Activated CD8-positive, alpha-beta T cell treated with anti-CD3 and anti-CD28 coated beads, Interleukin-2, amount 10 ng/mL, durations not matched to agents 7 days and 5 days (primary cell): ENCODE measurements at regions of chr20 and their contacts with region 1.

Region 1: DNA sequence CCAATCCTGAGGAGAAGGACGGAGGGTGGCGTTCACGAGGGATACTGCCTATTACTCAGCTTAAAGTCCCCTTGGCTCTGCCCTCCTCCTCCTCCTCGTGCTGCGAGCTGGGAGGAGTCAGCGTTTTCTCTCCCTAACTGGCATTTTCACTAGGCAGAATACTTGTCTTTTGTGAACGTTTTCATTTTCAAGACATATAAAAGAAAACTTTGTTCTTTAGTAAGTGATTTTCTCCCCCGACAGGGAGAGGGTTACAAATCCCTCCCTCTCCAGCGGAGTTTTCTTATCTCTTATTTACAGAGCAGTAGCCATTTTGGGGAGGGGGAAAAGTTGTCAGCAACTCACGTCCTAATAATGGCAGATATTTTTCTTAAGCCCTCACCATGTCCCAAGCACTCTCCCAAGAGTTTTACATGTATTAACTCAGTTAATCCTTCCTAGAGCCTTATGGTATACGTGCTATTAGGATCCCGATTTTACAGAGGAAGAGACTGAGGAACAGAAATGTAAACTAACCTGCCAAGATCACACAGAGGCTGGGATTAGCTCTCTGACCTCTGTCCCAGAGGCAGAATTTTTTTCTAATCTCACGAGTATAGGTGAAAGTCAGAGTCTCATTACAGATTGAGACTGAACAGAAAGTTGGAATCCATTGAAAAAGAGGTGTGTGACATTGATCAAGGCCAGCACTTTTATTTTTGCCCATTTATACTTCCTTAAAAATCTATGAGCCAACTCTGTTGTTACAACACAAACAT is 30.0 kb upstream of the ZNF217 start:
- DNase-seq: peak; percentile 56
- ATAC-seq: peak; percentile 75
- H3K4me3 Mint-ChIP-seq: peak overlapping the region; percentile 72
- H3K27ac Mint-ChIP-seq: peak overlapping the region; percentile 97
- H3K4me1 Mint-ChIP-seq: peaks cover 56% of the 10 kb centered on the region
- H3K27me3 Mint-ChIP-seq: no peaks in the 10 kb centered on the region

Region 2: DNA sequence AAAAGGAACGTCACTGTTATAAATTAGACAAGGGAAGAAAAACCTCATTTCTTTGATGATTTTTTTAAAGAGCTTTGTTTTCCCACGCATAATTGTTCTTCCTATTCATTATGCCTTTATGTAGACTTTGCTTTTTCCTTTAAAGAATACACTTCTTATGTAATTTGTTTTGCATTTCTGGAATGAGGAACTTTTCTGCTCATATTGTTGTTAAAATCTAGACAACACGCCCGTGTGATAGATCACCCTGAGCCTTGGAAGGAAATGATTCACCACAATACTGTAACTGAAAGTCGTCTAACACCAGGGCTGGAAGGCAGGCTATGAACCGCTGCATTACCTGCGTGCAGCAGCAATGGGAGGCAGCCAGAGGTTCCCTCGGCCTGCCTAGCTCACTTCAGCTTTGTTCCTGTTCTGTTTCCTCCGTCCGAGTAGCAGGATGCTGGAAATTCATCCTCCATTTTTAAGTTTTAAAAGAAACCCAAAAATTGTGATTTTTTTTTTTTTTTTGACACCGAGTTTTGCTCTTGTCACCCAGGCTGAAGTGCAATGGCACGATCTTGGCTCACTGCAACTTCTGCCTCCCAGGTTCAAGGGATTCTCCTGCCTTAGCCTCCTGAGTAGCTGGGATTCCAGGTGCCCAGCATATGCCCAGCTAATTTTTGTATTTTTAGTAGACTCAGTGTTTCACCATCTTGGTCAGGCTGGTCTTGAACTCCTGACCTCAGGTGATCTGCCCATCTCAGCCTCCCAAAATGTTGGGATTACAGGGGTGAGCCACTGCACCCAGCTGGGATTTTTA is 19.6 kb after region 1 on chr20:
- CTCF ChIA-PET with region 1: interaction called, 15 read pairs
- POLR2A ChIA-PET with region 1: interaction called, 13 read pairs
- DNase-seq: peak; percentile 83
- ATAC-seq: peak; percentile 94
- H3K4me3 Mint-ChIP-seq: peak overlapping the region; percentile 56
- H3K27ac Mint-ChIP-seq: peak overlapping the region; percentile 87
- H3K4me1 Mint-ChIP-seq: peaks cover 55% of the 10 kb centered on the region
- H3K27me3 Mint-ChIP-seq: no peaks in the 10 kb centered on the region

Region 3: DNA sequence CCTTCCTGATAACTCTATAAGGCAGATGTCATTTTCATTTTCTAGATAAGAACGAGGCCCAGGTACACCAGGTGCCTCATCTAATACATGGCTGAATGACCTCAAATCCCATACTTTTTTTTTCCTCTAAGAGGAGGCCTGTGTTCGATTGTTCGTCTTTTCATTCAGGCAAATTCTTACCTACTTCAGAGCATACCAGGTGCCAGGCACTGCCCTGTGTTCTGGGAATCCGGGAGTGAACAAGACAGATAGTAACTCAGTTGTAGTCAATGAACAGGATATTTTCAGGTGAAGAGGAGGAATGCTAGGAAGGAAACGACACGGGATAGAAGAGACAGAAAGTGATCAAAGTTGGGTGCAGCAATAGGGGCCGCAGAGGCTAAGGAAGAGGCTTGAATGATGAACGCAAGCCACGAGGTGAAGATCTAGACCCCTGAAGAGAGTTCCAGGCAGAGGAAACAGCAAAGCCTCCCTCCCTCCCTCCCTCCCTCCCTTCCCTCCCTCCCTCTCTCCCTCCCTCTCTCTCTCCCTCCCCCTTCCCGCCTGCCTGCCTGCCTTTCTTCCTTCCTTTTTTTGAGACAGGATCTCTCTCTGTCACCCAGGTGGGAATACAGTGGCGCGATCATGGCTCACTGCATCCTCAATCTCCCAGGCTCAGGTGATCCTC is 120.1 kb after region 1 on chr20:
- CTCF ChIA-PET with region 1: no interaction called
- POLR2A ChIA-PET with region 1: no interaction called
- DNase-seq: no peak
- ATAC-seq: no peak
- H3K4me3 Mint-ChIP-seq: no peak overlapping the region
- H3K27ac Mint-ChIP-seq: no peak overlapping the region
- H3K4me1 Mint-ChIP-seq: peaks cover 52% of the 10 kb centered on the region
- H3K27me3 Mint-ChIP-seq: no peaks in the 10 kb centered on the region